ENCODE measurements at regions of chr22 and their contacts with region 1.

Region 1: DNA sequence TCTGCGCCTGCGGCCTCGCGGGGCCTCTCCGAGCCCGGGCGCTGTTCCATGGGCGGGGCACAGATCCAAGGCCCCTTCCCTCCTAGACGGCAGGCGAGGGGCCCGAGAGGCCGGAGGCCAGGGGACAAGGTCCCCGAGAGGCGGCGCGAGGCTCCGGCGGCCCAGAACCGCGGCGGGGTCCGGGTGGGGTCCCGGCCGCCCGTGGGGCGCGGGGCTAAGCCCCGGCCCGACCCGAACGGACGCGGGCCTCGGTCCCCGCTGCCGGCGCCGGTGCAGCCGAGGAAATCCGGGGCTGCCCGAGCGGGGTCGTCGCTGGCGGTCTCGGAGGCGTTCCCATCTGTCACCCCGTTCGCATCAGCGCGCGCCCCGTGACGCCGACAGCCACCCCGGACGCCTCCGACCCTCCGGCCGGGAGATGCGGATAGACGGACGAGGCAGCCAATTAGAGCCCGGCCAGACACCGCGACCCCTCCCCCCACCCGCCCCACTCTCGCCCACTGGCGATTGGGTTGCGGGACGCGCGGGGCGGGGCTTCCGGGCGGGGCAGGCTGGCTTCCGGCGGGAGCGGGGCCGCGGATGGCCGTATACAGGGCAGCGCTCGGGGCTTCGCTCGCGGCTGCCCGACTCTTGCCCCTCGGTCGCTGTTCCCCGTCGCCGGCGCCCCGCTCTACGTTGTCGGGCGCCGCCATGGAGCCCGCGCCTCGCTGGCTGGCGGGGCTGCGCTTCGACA is at the start of gene SELENOO:
- DNase-seq: peak; percentile 94
- H3K4me3 ChIP-seq: peak within 1 kb of the TSS; percentile 95
- H3K27ac ChIP-seq: peak within 1 kb of the TSS; percentile 90
- H3K4me1 ChIP-seq: peaks cover 58% of the 10 kb centered on the region
- H3K27me3 ChIP-seq: no peaks in the 10 kb centered on the region
- CTCF ChIP-seq: no peak
- total RNA-seq, gene SELENOO: 15.0 TPM

Region 2: GRCh38 chr22:50112151-50113118 is 88.2 kb before region 1 on chr22:
- intact Hi-C with region 1: no loop called
- DNase-seq: no peak
- H3K4me3 ChIP-seq: no peak overlapping the region
- H3K27ac ChIP-seq: peak overlapping the region; percentile 3
- H3K4me1 ChIP-seq: no peaks in the 10 kb centered on the region
- H3K27me3 ChIP-seq: peaks cover 61% of the 10 kb centered on the region
- CTCF ChIP-seq: no peak

Region 3: GRCh38 chr22:50157709-50158375 is 42.8 kb before region 1 on chr22:
- intact Hi-C with region 1: loop called (anchors 10 kb)
- DNase-seq: no peak
- H3K4me3 ChIP-seq: no peak overlapping the region
- H3K27ac ChIP-seq: no peak overlapping the region
- H3K4me1 ChIP-seq: no peaks in the 10 kb centered on the region
- H3K27me3 ChIP-seq: peaks cover 48% of the 10 kb centered on the region
- CTCF ChIP-seq: no peak

Region 4: GRCh38 chr22:50250555-50251476 is 50.2 kb after region 1 on chr22 and contains the start of gene HDAC10:
- intact Hi-C with region 1: no loop called
- DNase-seq: peak; percentile 84
- H3K4me3 ChIP-seq: peak within 1 kb of the TSS; percentile 89
- H3K27ac ChIP-seq: peak within 1 kb of the TSS; percentile 85
- H3K4me1 ChIP-seq: peaks cover 42% of the 10 kb centered on the region
- H3K27me3 ChIP-seq: no peaks in the 10 kb centered on the region
- CTCF ChIP-seq: no peak
- total RNA-seq, gene HDAC10: 13.6 TPM

Measured in left ventricle myocardium inferior (tissue), 1 donor.